ENCODE measurements at regions of chr19 and their contacts with region 1.

Region 1: GRCh38 chr19:14517840-14518505 is at the start of gene DNAJB1:
- DNase-seq: peak; percentile 78
- H3K4me3 ChIP-seq: peak within 1 kb of the TSS; percentile 59 to 93 (median 85)
- H3K27ac ChIP-seq: peak within 1 kb of the TSS; percentile 91
- H3K4me1 ChIP-seq: peaks cover 47% of the 10 kb centered on the region
- H3K27me3 ChIP-seq: no peaks in the 10 kb centered on the region
- CTCF ChIP-seq: no peak
- POLR2A ChIP-seq: peak; percentile 99
- total RNA-seq, gene DNAJB1: 55.8 and 58.6 TPM in 2 replicates

Region 2: GRCh38 chr19:13856497-13856896 is 661.5 kb before region 1 on chr19:
- CTCF ChIA-PET with region 1: no interaction called
- POLR2A ChIA-PET with region 1: interaction called, 14 read pairs
- dilution Hi-C with region 1: no loop called
- intact Hi-C with region 1: no loop called
- DNase-seq: no peak
- H3K4me3 ChIP-seq: no peak overlapping the region
- H3K27ac ChIP-seq: no peak overlapping the region
- H3K4me1 ChIP-seq: peaks cover 12% of the 10 kb centered on the region
- H3K27me3 ChIP-seq: no peaks in the 10 kb centered on the region
- CTCF ChIP-seq: no peak
- POLR2A ChIP-seq: no peak

Region 3: DNA sequence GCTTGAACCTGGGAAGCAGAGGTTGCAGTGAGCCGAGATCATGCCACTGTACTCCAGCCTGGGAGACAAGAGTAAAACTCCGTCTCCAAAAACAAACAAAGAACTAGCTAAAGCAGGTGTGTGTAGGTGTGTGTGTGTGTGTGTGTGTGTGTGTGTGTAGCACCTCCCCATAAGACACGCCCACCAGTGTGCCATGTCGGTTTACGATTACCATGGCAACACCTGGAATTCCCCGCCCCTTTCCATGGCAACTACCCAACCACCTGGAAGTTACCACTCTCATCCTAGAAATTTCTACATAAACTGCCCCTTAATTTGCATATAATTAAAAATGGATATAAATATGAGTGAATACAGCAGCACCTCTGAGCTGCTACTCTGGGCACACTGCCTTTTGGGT is 217.7 kb before region 1 on chr19:
- CTCF ChIA-PET with region 1: no interaction called
- POLR2A ChIA-PET with region 1: no interaction called
- dilution Hi-C with region 1: no loop called
- intact Hi-C with region 1: no loop called
- DNase-seq: no peak
- H3K4me3 ChIP-seq: no peak overlapping the region
- H3K27ac ChIP-seq: no peak overlapping the region
- H3K4me1 ChIP-seq: no peaks in the 10 kb centered on the region
- H3K27me3 ChIP-seq: no peaks in the 10 kb centered on the region
- CTCF ChIP-seq: no peak
- POLR2A ChIP-seq: no peak

Region 4: GRCh38 chr19:14479975-14480699 is 37.8 kb before region 1 on chr19:
- CTCF ChIA-PET with region 1: interaction called, 12 read pairs
- POLR2A ChIA-PET with region 1: no interaction called
- dilution Hi-C with region 1: no loop called
- intact Hi-C with region 1: no loop called
- DNase-seq: no peak
- H3K4me3 ChIP-seq: no peak overlapping the region
- H3K27ac ChIP-seq: no peak overlapping the region
- H3K4me1 ChIP-seq: peaks cover 9% of the 10 kb centered on the region
- H3K27me3 ChIP-seq: no peaks in the 10 kb centered on the region
- CTCF ChIP-seq: peak; percentile 88 to 97
- POLR2A ChIP-seq: no peak

Region 5: DNA sequence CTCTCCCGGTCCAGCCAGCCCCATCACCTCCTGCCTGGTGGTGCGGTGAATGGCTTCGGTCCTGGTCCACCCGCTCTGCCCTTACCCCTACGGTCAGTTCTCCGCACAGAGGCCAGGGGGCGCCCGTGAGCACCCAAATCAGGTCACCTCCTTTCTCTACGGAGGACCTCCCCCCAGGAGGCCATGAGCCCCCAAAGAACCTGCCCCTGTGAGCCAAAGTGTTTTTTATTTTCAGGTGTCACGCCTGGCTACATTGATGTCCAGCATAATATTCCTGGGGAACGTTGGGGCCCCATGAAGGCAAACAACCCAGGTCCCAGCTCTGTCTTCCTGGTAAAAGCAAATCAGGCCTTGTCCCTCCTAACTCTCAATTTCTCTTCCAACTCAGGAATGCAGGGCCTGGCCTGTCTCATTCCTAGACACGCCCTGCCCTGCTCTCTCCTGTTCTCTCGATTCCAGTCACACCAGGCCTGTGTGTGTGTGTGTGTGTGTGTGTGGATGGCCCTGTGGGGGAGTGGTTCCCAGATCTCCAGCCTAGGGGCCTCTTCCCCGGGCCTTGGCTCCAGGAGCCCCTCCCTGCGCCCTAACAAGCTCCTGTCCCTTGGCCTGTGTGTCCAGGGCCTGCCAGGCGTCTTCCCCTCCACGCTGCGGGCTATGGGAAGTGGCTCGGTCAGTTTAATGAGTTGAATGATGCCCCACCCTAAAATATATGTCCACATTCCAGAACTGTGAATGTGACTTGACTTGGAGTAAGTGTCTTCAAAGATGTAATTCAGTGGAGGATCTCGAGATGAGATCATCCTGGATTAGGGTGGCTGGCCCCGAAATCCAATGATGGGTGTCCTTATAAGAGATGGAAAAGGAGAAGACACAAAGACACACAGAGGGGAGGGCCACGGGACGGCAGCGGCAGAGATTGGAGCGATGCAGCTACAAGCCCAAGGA is 12.2 kb before region 1 on chr19:
- CTCF ChIA-PET with region 1: interaction called, 22 read pairs
- POLR2A ChIA-PET with region 1: interaction called, 27 read pairs
- dilution Hi-C with region 1: no loop called
- intact Hi-C with region 1: loop called (anchors 1 kb)
- DNase-seq: peak; percentile 28
- H3K4me3 ChIP-seq: no peak overlapping the region
- H3K27ac ChIP-seq: no peak overlapping the region
- H3K4me1 ChIP-seq: peaks cover 13% of the 10 kb centered on the region
- H3K27me3 ChIP-seq: peaks cover 0 to 2% of the 10 kb centered on the region in 2 experiments
- CTCF ChIP-seq: peak; percentile 71 to 83
- POLR2A ChIP-seq: no peak

Region 6: DNA sequence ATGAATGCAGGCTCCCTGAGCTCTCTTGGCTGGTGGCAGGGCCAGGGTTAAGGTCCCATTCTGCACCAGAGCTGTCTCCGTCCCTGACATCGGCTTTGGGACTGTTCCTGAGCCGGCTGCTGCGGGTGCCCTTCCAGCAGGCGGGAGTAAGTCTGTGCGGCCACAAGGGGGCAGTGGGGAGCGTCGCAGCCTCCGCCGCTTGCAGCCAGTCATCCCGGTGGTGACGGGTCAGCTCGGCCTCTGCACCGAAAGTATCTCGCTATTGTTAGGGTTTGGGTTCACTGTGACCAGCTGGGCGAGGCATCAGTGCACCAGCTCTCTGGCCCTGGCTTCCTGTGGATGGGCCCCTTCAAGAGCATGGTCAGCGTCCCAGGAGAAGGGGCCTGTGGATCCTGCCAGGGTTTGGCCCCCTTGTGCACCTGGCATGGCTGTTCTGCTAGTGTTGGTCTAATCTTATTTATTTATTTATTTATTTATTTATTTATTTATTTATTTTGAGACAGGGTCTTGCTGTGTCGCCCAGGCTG is 38.8 kb after region 1 on chr19:
- CTCF ChIA-PET with region 1: interaction called, 11 read pairs
- POLR2A ChIA-PET with region 1: interaction called, 3 read pairs
- dilution Hi-C with region 1: no loop called
- intact Hi-C with region 1: no loop called
- DNase-seq: peak; percentile 79
- H3K4me3 ChIP-seq: no peak overlapping the region
- H3K27ac ChIP-seq: no peak overlapping the region
- H3K4me1 ChIP-seq: peaks cover 6% of the 10 kb centered on the region
- H3K27me3 ChIP-seq: no peaks in the 10 kb centered on the region
- CTCF ChIP-seq: peak; percentile 98 to 99
- POLR2A ChIP-seq: no peak

Region 7: GRCh38 chr19:14595516-14595915 is 77.5 kb after region 1 on chr19:
- CTCF ChIA-PET with region 1: no interaction called
- POLR2A ChIA-PET with region 1: no interaction called
- dilution Hi-C with region 1: no loop called
- intact Hi-C with region 1: no loop called
- DNase-seq: no peak
- H3K4me3 ChIP-seq: no peak overlapping the region
- H3K27ac ChIP-seq: no peak overlapping the region
- H3K4me1 ChIP-seq: no peaks in the 10 kb centered on the region
- H3K27me3 ChIP-seq: no peaks in the 10 kb centered on the region
- CTCF ChIP-seq: no peak
- POLR2A ChIP-seq: no peak

Region 8: DNA sequence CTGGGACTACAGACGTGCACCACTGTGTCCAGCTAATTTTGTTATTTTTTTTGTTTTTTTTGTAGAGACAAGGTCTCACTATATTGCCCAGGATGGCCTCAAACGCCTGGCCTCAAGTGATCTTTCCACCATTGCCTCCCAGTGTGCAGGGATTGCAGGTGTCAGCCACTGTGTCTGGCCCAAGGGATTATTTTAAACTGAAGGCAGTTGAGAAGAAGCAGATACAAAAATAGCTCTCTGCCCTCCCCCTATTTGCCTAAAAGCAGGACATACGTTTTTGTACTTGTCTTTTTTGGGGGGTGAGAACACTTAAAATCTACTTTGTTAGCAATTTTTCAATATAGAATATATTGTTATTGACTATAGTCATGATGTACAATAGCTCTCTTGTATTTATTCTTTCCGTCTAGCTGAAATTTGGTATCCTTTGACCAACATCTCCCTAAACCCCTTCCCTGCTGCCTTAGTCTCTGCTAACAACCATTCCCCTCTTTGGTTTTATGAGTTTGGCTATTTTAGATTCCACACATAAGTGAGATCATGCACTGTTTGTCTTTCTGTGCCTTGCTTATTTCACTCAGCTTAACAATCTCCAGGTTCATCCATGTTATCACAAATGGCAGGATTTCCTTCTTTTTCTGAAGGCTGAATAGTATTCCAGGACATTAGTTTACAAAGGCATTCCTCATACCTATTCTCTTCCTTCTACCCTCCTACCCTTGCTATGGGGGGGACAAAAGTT is 121.7 kb after region 1 on chr19:
- CTCF ChIA-PET with region 1: no interaction called
- POLR2A ChIA-PET with region 1: no interaction called
- dilution Hi-C with region 1: no loop called
- intact Hi-C with region 1: no loop called
- DNase-seq: no peak
- H3K4me3 ChIP-seq: no peak overlapping the region
- H3K27ac ChIP-seq: no peak overlapping the region
- H3K4me1 ChIP-seq: no peaks in the 10 kb centered on the region
- H3K27me3 ChIP-seq: no peaks in the 10 kb centered on the region
- CTCF ChIP-seq: no peak
- POLR2A ChIP-seq: no peak

Region 9: GRCh38 chr19:14770944-14771839 is 253.2 kb after region 1 on chr19:
- CTCF ChIA-PET with region 1: no interaction called
- POLR2A ChIA-PET with region 1: no interaction called
- dilution Hi-C with region 1: no loop called
- intact Hi-C with region 1: no loop called
- DNase-seq: no peak
- H3K4me3 ChIP-seq: no peak overlapping the region
- H3K27ac ChIP-seq: no peak overlapping the region
- H3K4me1 ChIP-seq: no peaks in the 10 kb centered on the region
- H3K27me3 ChIP-seq: no peaks in the 10 kb centered on the region
- CTCF ChIP-seq: no peak
- POLR2A ChIP-seq: no peak